Sigmoid colon (tissue), 7 donors: ENCODE measurements at regions of chr11 and their contacts with region 1.

Region 1: DNA sequence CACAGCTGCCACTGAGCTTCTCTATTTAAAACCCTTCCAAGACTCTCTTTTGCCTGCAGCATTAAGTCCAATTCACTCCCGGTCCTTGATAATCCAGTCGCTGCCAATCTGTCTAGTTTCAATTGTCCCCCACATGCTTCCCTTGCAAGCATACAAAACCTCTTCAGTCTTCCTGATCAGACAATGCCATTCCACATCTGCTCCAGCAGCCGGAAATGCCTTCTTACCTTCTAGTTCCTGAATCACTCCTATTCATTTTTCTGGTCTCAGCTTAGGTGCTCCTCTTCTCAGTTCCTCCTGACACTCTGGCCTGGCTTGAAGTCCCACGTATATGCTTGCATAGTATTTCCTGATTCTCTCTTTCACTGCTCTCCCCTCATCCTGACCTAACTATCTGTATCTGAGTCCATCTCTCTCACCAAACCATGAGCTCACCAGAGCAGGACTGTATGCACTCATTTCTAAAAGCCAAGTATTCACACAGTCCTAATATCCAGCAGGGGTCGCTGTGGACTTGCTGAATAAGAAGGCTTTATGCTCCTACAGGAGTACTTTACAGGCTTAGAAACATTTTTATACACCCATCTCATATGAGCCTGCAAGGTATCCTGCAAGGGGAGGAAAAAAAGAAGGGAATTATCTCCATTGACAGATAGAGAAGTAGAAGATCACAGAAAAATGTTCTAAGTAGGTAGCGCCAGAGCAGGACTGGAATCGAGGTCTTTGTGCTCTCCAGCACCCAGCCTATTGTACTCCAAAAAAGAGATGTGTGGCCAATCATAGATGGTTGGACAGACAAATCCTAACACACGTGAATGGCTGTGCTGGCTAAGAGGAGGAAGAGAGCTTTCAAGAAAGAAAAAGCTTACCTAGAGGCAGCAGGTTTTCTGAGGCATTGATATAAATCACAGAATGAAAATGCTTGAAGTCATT is 19.2 kb downstream of the XRRA1 start:
- DNase-seq: peak; percentile 83
- H3K4me3 ChIP-seq: no peak overlapping the region
- H3K27ac ChIP-seq: no peak overlapping the region
- H3K4me1 ChIP-seq: peaks cover 0 to 9% (median 0%) of the 10 kb centered on the region in 4 donors
- H3K27me3 ChIP-seq: no peaks in the 10 kb centered on the region
- CTCF ChIP-seq: peak; percentile 59 to 81 (median 76)
- EP300 ChIP-seq: no peak
- POLR2A ChIP-seq: no peak

Region 2: GRCh38 chr11:74806267-74806666 is 123.4 kb before region 1 on chr11:
- intact Hi-C with region 1: no loop called
- DNase-seq: no peak
- H3K4me3 ChIP-seq: no peak overlapping the region
- H3K27ac ChIP-seq: no peak overlapping the region
- H3K4me1 ChIP-seq: peaks cover 0 to 8% (median 2%) of the 10 kb centered on the region in 4 donors
- H3K27me3 ChIP-seq: no peaks in the 10 kb centered on the region
- CTCF ChIP-seq: no peak
- EP300 ChIP-seq: no peak
- POLR2A ChIP-seq: no peak

Region 3: GRCh38 chr11:75031771-75032549 is 102.3 kb after region 1 on chr11:
- intact Hi-C with region 1: loop called (anchors 1 kb)
- DNase-seq: peak; percentile 72
- H3K4me3 ChIP-seq: no peak overlapping the region
- H3K27ac ChIP-seq: no peak overlapping the region
- H3K4me1 ChIP-seq: no peaks in the 10 kb centered on the region
- H3K27me3 ChIP-seq: no peaks in the 10 kb centered on the region
- CTCF ChIP-seq: peak; percentile 13 to 66 (median 60)
- EP300 ChIP-seq: no peak
- POLR2A ChIP-seq: no peak

Region 4: GRCh38 chr11:75399344-75400145 is 469.8 kb after region 1 on chr11 and contains the start of gene RPS3:
- intact Hi-C with region 1: no loop called
- DNase-seq: peak; percentile 95
- H3K4me3 ChIP-seq: peak within 1 kb of the TSS; percentile 51 to 72 (median 66)
- H3K27ac ChIP-seq: peak within 1 kb of the TSS; percentile 86 to 91 (median 90)
- H3K4me1 ChIP-seq: peaks cover 0 to 31% (median 23%) of the 10 kb centered on the region in 4 donors
- H3K27me3 ChIP-seq: no peaks in the 10 kb centered on the region
- CTCF ChIP-seq: no peak
- EP300 ChIP-seq: peak in 1 of 4 donors; percentile 52
- POLR2A ChIP-seq: peak; percentile 90 to 91
- total RNA-seq, gene RPS3: 967 to 2,377 (median 1,713) TPM